Naive thymus-derived CD4-positive, alpha-beta T cell (primary cell): ENCODE measurements at regions of chr9 and their contacts with region 1.

Region 1: DNA sequence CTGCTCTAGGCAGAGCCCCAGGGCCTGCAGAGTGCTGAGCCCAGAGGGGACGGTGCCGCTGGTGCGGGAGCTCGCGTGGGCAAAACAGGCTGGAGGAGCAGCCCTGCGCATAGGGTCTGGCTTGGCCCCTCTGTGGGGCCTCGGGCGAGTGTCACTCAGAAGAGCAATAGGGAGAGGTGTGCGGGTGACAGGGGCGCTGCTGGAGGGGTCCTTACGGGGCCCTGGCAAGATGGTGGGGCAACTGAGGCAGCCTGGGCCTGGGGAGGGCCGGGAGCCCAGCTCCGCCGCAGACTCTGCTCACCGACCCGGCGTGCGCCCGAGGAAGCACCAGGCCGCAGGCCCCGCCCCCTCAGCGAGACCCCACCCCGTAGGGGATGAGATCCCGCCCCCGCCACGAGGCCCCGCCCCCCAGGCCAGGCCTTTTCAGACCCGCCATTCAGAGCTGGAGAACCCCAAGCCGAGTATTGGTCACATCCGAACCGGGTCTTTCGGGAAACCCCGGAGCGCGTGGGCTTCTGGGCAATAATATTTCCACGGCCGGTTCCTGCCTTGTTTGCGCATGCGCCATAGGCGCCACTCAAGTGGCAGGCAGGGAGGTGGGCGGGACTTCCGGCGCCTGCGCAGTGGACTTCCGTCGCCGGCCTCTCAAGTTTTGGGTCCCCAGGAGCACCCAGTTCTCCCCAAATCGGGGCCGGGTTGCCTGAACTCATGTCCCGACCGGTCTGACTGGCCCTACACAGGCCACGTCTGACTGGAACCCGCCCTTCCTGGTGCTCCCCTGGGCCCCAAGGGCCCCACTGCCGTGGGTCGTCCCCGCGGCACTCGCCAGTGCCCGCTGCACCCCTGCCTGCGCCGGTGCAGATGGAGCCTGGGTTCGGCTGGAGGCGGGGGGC is 1.3 kb upstream of the RNF208 start:
- DNase-seq: peak; percentile 93 to 99 (median 99)
- ATAC-seq: peak; percentile 97
- H3K4me3 ChIP-seq: peak overlapping the region; percentile 86
- H3K4me3 Mint-ChIP-seq: peak overlapping the region; percentile 78 to 88 (median 82)
- H3K27ac ChIP-seq: peak overlapping the region; percentile 91
- H3K27ac Mint-ChIP-seq: peak overlapping the region in 7 of 9 donors; percentile 21 to 92 (median 75)
- H3K4me1 ChIP-seq: peaks cover 9 to 11% of the 10 kb centered on the region in 2 donors
- H3K4me1 Mint-ChIP-seq: peaks cover 5 to 15% (median 6%) of the 10 kb centered on the region in 7 donors
- H3K27me3 ChIP-seq: no peaks in the 10 kb centered on the region
- H3K27me3 Mint-ChIP-seq: peaks cover 0 to 6% (median 4%) of the 10 kb centered on the region in 5 donors

Region 2: DNA sequence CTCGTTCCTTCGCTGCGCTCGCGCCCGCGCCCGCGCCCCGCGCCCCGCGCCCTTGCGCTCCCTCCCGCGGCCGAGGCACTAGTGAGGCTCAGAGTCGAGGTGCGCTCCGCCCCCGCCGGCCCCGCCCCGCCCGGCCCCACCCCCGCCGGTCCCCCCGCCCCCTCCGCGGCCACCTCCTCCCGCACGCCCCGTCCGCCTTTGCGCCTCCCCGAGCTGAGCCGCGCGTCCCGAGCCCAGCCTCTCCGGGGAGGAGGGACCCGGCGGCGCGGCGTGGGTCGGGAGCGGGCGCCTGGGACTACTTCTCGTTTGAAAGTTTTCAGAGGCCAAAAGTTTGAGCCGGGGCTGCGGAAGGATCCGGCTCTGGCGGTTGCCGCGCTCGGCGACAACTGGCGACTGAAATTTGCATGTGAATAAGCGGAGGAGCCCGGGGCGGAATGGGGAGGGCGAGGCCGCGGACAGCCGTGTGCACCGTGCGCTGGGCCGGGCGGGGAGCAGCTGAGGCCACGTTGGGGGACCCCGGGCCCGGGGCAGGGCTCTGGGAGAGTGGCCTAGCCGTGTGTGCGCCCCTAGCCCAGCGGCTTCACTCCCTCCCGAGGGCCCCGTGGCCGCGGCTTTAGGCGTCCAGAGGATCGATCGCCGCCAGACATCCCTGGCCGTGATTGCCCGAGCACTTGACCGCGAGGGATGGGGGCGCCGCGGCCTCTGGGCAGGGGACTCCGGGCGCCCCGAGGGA is 677.2 kb before region 1 on chr9 and contains the start of gene NOTCH1:
- CTCF ChIA-PET with region 1: no interaction called
- POLR2A ChIA-PET with region 1: no interaction called
- intact Hi-C with region 1: loop called in 1 of 2 experiments (anchors 5 kb)
- DNase-seq: peak; percentile 77 to 91 (median 86)
- ATAC-seq: peak; percentile 89
- H3K4me3 ChIP-seq: peak within 1 kb of the TSS; percentile 81
- H3K4me3 Mint-ChIP-seq: peak within 1 kb of the TSS; percentile 78 to 95 (median 88)
- H3K27ac ChIP-seq: peak within 1 kb of the TSS; percentile 80
- H3K27ac Mint-ChIP-seq: peak within 1 kb of the TSS; percentile 57 to 90 (median 81)
- H3K4me1 ChIP-seq: peaks cover 20 to 32% of the 10 kb centered on the region in 2 donors
- H3K4me1 Mint-ChIP-seq: peaks cover under 1 to 43% (median 28%) of the 10 kb centered on the region in 7 donors
- H3K27me3 ChIP-seq: no peaks in the 10 kb centered on the region
- H3K27me3 Mint-ChIP-seq: no peaks in the 10 kb centered on the region
- total RNA-seq, gene NOTCH1: 49.7 to 92.9 (median 58.0) TPM

Region 3: DNA sequence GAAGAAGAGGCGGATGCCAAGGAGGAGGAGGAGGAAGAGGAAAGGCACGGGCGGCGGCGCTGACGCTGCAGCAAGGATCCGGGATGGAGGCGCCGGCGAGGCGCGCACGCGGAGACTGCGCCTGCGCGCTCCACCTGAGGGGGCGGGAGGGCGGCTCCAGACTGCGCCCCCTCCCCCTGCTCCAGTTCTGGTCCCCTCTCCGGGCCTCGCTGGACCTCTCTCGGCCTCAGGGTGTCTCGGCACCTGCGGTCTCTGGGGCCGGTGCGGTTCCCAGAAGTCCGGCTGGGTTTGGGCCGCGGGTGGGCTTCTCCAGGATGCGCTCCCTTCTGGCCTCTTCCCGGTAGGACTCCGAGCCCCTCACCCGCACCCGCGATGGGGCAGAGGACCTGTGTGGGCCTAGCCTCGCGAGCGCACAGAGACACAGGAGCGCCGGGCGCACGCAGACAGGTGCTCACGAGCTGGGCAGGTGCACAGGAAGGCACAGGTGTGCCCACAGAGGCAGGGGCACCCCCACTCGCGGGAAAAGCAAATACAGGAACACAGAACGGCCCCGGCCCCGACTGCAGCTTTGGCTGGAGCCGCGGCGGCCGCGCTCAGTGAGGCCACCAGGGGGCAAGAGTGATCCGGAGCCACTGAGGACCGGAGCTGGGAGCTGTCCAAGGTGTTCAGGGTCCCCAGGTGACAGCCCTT is 177.1 kb before region 1 on chr9 and contains the start of gene NPDC1:
- CTCF ChIA-PET with region 1: interaction called, 4 read pairs
- POLR2A ChIA-PET with region 1: interaction called, 3 read pairs
- intact Hi-C with region 1: loop called in 1 of 2 experiments (anchors 1 kb)
- DNase-seq: peak; percentile 55 to 86 (median 66)
- ATAC-seq: peak; percentile 92
- H3K4me3 ChIP-seq: peak within 1 kb of the TSS; percentile 46
- H3K4me3 Mint-ChIP-seq: peak within 1 kb of the TSS; percentile 29 to 79 (median 59)
- H3K27ac ChIP-seq: no peak within 1 kb of the TSS
- H3K27ac Mint-ChIP-seq: no peak within 1 kb of the TSS
- H3K4me1 ChIP-seq: peaks cover 9 to 25% of the 10 kb centered on the region in 2 donors
- H3K4me1 Mint-ChIP-seq: peaks cover 0 to 11% (median 9%) of the 10 kb centered on the region in 7 donors
- H3K27me3 ChIP-seq: peaks cover 9 to 35% of the 10 kb centered on the region in 2 donors
- H3K27me3 Mint-ChIP-seq: peaks cover 15 to 46% (median 34%) of the 10 kb centered on the region in 5 donors
- total RNA-seq, gene NPDC1: 2.3 to 37.5 (median 7.4) TPM

Region 4: GRCh38 chr9:137095664-137096517 is 127.4 kb before region 1 on chr9:
- CTCF ChIA-PET with region 1: interaction called, 7 read pairs
- POLR2A ChIA-PET with region 1: interaction called, 11 read pairs
- intact Hi-C with region 1: loop called in 1 of 2 experiments (anchors 1 kb)
- DNase-seq: peak; percentile 63 to 92 (median 89)
- ATAC-seq: peak; percentile 100
- H3K4me3 ChIP-seq: peak overlapping the region; percentile 63
- H3K4me3 Mint-ChIP-seq: peak overlapping the region; percentile 76 to 94 (median 86)
- H3K27ac ChIP-seq: peak overlapping the region; percentile 79
- H3K27ac Mint-ChIP-seq: peak overlapping the region; percentile 87 to 98 (median 95)
- H3K4me1 ChIP-seq: peaks cover 12 to 14% of the 10 kb centered on the region in 2 donors
- H3K4me1 Mint-ChIP-seq: peaks cover 9 to 28% (median 21%) of the 10 kb centered on the region in 7 donors
- H3K27me3 ChIP-seq: no peaks in the 10 kb centered on the region
- H3K27me3 Mint-ChIP-seq: no peaks in the 10 kb centered on the region

Region 5: DNA sequence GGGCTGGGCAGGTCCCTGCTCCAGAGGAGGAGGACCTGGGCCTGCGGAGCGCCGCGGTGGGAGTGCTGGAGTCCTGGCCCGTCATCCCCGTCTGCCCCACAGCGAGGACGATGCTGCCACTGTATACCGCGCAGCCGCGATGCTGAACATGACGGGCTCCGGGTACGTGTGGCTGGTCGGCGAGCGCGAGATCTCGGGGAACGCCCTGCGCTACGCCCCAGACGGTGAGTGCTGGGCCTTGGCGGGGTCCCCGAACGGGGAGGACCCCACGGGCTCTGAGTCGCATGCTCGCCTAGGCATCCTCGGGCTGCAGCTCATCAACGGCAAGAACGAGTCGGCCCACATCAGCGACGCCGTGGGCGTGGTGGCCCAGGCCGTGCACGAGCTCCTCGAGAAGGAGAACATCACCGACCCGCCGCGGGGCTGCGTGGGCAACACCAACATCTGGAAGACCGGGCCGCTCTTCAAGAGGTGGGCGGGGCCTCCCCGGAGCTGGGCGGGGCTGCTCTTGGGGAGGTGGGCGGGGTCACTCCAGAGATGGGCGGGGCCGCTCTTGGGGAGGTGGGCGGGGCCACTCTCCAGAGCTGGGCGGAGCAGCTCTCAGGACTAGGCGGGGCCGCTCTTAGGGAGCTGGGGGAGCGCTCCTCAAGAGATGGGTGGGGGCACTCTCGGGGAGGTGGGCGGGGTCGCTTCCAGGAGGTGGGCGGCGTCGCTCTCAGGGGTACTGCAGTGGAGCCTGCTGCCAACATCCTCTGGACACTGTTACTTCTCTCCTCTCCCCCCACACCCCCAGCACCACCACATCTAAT is 66.6 kb before region 1 on chr9:
- CTCF ChIA-PET with region 1: no interaction called
- POLR2A ChIA-PET with region 1: no interaction called
- intact Hi-C with region 1: loop called in 1 of 2 experiments (anchors 1 kb)
- DNase-seq: peak in 6 of 9 donors; percentile 27 to 77 (median 40)
- ATAC-seq: peak; percentile 88
- H3K4me3 ChIP-seq: peak overlapping the region; percentile 41
- H3K4me3 Mint-ChIP-seq: peak overlapping the region in 8 of 10 donors; percentile 27 to 78 (median 66)
- H3K27ac ChIP-seq: no peak overlapping the region
- H3K27ac Mint-ChIP-seq: no peak overlapping the region
- H3K4me1 ChIP-seq: peaks cover 0 to 16% of the 10 kb centered on the region in 2 donors
- H3K4me1 Mint-ChIP-seq: peaks cover 5 to 19% (median 11%) of the 10 kb centered on the region in 7 donors
- H3K27me3 ChIP-seq: peaks cover 4 to 24% of the 10 kb centered on the region in 2 donors
- H3K27me3 Mint-ChIP-seq: peaks cover 32 to 44% (median 38%) of the 10 kb centered on the region in 5 donors

Region 6: GRCh38 chr9:137200311-137201204 is 22.8 kb before region 1 on chr9 and contains the start of gene TPRN:
- CTCF ChIA-PET with region 1: interaction called, 3 read pairs
- POLR2A ChIA-PET with region 1: interaction called, 42 read pairs
- intact Hi-C with region 1: loop called (anchors 1 kb)
- DNase-seq: peak; percentile 89 to 98 (median 97)
- ATAC-seq: peak; percentile 98
- H3K4me3 ChIP-seq: peak within 1 kb of the TSS; percentile 75
- H3K4me3 Mint-ChIP-seq: peak within 1 kb of the TSS; percentile 77 to 89 (median 84)
- H3K27ac ChIP-seq: peak within 1 kb of the TSS; percentile 78
- H3K27ac Mint-ChIP-seq: peak within 1 kb of the TSS; percentile 12 to 91 (median 78)
- H3K4me1 ChIP-seq: peaks cover 20 to 23% of the 10 kb centered on the region in 2 donors
- H3K4me1 Mint-ChIP-seq: peaks cover 16 to 34% (median 23%) of the 10 kb centered on the region in 7 donors
- H3K27me3 ChIP-seq: no peaks in the 10 kb centered on the region
- H3K27me3 Mint-ChIP-seq: no peaks in the 10 kb centered on the region
- total RNA-seq, gene TPRN: 7.1 to 13.5 (median 8.5) TPM